Activated T-helper 1 cell treated with anti-CD3 and anti-CD28 coated beads, Interleukin-12 subunit alpha, Interleukin-12 subunit beta, Interleukin-2, Interleukin-4 antibody, amounts not matched to agents 30 ng/mL and 10 ng/mL and 1 ng/mL, durations not matched to agents 14 hours and 24 hours and 36 hours (primary cell): ENCODE measurements at regions of chr11 and their contacts with region 1.

Region 1: DNA sequence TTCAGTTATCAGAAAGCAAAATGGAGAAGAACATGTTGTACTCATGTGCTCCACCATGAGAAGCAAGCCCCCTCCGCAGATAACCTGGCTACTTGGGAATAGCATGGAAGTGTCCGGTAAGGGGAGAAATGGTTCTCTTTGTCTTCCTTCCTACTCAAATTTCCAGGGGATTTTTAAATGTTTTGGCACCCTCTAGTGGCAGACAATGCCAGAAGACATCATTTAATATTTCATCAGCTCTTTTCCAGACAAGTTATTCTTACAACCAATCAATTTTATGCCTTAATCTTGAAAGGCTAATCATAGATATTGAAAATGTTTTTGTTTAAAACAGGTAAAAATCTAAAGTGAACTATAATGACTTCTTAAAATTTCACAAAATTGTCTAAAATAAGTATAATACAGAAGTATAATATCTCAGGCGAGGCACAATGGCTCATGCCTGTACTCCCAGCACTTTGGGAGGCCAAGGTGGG is 15.7 kb downstream of the CRTAM start:
- DNase-seq: peak; percentile 15
- H3K4me3 Mint-ChIP-seq: no peak overlapping the region
- H3K27ac Mint-ChIP-seq: no peak overlapping the region
- H3K4me1 Mint-ChIP-seq: peaks cover 51% of the 10 kb centered on the region
- H3K27me3 Mint-ChIP-seq: peaks cover 13% of the 10 kb centered on the region

Region 2: DNA sequence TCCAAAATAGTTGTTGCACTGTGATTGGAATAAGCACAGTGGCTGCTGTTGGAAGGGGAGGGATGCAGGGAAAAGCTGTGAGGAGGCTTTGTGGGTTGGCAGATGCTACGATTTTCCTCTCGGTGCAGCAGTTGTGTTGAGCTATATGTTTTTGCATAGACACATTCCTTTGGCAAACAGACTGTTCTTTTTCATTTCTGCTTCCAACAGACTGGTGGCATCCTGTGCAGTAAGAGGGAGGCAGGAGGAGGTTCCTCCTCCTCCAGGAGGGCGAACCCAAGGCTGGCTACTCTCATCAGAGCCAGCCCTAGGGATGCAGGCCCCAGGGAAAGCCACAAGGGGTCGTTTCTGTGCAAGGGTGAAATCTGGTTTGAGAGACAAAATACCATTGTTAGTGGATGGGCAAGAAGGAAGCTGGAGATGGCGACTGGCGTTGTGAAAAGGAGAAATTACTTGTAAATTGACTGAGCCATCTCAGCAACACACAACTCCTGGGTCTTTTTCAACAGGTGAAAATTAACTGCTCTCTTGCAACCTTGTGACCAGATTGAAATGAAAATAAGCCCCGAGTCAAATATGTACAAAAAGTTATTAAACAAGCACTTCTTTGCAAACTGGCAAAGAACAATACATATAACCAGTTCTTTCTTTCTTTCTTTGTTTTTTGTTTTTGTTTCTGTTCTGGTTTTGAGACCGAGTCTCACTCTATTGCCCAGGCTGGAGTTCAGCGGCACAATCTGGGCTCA is 225.0 kb before region 1 on chr11:
- intact Hi-C with region 1: loop called (anchors 1 kb)
- DNase-seq: peak; percentile 34
- H3K4me3 Mint-ChIP-seq: no peak overlapping the region
- H3K27ac Mint-ChIP-seq: no peak overlapping the region
- H3K4me1 Mint-ChIP-seq: peaks cover 4% of the 10 kb centered on the region
- H3K27me3 Mint-ChIP-seq: peaks cover 5% of the 10 kb centered on the region

Region 3: DNA sequence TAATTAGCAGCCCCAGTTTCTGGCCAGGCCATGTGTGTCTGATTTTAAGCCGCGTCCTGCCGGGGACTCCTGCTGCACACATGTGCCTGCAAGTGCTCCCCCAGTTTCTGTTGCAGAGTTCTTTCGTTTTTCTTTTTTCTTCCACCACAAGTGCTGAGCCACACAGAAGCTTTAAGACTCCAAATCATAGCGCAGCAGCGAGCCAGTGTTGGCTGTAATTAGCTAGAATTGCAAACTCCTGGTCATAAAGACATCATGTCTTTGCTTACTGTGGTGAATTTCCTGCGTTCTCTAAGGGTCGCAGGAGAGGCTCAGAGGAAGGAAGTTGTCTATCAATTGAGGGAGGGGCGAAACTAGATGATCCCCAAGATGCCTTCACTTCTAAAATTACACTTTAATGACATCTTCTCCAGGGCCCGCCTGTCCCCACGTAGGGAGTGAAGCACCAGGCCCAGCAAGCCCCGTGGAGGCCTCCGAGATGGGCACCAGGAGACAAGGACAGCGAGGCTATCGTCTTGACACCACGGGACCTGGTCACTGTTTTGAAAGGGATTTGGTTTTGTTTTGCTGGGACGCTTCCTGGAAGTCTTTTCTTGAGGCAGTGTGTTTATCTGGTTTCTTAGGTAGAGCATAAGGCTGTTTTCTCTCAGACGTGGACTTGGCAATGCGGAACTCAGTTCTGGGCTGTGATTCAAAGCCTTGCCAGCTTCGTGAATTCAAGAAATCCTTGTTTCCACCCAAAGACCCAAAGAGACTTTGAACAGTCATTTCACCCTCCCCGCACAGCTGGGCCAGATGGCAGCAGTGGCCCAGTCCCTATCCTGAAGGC is 126.7 kb before region 1 on chr11:
- intact Hi-C with region 1: loop called (anchors 1 kb)
- DNase-seq: peak; percentile 19
- H3K4me3 Mint-ChIP-seq: peak overlapping the region; percentile 67
- H3K27ac Mint-ChIP-seq: peak overlapping the region; percentile 87
- H3K4me1 Mint-ChIP-seq: peaks cover 46% of the 10 kb centered on the region
- H3K27me3 Mint-ChIP-seq: peaks cover 3% of the 10 kb centered on the region

Region 4: DNA sequence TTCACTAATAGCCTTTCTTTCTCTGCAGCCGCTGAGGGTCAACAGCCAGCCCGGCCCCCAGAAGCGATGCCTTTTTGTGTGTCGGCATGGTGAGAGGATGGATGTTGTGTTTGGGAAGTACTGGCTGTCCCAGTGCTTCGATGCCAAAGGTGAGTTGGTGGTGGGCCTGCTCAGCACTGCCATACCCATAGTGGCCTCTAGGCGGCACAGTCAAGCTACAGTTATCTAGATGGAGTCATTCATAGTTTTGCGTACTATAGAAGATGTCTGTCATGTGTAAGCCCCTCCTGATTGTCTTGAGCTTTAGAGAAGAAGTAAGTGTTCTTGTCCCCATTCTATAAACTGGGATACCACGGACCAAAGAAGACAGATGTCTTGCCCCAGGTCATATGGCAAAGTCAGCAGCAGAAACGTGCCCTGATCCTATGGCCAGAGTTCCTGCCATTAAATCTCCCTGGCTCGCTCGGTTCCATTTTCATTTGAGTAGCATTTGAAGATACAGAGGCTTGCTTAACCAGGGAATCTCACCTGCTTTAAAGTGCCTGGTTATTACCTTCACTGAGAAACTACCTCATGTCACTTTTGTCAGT is 57.8 kb before region 1 on chr11:
- intact Hi-C with region 1: loop called (anchors 1 kb)
- DNase-seq: peak; percentile 33
- H3K4me3 Mint-ChIP-seq: no peak overlapping the region
- H3K27ac Mint-ChIP-seq: no peak overlapping the region
- H3K4me1 Mint-ChIP-seq: no peaks in the 10 kb centered on the region
- H3K27me3 Mint-ChIP-seq: peaks cover 5% of the 10 kb centered on the region

Region 5: DNA sequence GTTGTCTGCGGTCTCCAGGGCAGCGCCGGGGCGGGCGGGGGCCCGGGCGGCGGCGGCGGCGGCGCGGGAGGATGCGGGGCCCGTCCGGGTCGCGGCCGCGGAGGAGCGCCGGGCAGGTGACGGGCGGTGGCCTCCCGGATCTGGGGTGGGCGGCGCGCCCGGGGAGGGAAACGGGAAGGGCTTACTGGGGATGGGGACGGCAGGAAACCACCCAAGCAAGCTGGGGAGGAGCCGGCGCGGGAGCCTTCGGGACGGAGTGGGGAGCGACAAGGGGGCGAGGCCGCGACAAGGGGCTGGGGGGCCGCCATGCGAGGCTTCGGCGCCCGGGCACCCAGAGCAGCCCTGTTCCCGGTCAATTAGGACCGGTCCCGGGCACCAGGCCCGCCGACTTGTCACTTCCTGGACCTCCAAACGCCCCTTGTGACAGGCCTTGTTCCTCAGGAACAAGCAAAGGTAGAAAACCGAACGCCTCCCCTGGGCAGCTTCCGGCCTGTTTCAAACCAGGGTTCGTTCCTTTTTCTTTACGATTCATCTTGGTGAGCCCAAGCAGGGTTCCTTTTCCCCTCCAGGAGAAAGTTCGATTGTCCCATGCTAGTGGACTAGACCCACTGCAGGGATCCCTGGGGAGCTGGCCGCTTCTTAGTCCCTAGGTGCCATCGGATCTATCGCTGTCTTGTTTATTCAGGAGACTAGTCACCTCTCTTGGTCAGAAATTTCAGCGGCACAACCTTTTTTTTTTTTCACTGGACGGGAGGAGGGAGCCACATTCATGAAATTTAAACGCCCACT is 29.0 kb after region 1 on chr11:
- intact Hi-C with region 1: loop called (anchors 2 kb)
- DNase-seq: peak; percentile 36
- H3K4me3 Mint-ChIP-seq: peak overlapping the region; percentile 84
- H3K27ac Mint-ChIP-seq: peak overlapping the region; percentile 75
- H3K4me1 Mint-ChIP-seq: peaks cover 28% of the 10 kb centered on the region
- H3K27me3 Mint-ChIP-seq: peaks cover 9% of the 10 kb centered on the region